Aorta (tissue), 5 donors: ENCODE measurements at regions of chr15 and their contacts with region 1.

Region 1: DNA sequence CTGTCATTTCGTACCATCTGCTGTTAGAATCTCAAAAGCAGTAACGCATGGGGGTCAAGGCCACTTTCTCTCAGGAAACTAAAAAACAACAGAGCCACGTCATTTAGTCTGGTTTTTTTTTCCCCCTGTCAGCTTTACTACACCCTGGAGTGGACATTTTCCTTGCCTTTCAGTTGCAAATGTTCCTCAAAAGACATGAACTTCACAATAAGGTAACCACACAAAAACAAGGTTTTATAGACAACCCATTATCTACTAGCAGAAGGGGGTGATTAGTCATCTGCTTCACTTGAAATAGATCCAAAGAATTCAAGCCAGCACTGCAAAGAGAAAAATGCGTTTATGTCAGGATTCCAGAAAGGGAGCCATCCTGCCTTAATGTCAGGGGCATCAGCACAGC is 171.8 kb upstream of the CDIN1 start:
- DNase-seq: no peak
- ATAC-seq: no peak
- H3K4me3 ChIP-seq: no peak overlapping the region
- H3K27ac ChIP-seq: no peak overlapping the region
- H3K4me1 ChIP-seq: no peaks in the 10 kb centered on the region
- H3K27me3 ChIP-seq: no peaks in the 10 kb centered on the region

Region 2: GRCh38 chr15:36356978-36357601 is 50.6 kb before region 1 on chr15:
- intact Hi-C with region 1: no loop called
- DNase-seq: no peak
- ATAC-seq: peak; percentile 89
- H3K4me3 ChIP-seq: no peak overlapping the region
- H3K27ac ChIP-seq: peak overlapping the region; percentile 51 to 85
- H3K4me1 ChIP-seq: peaks cover 6 to 7% of the 10 kb centered on the region in 2 donors
- H3K27me3 ChIP-seq: no peaks in the 10 kb centered on the region

Region 3: GRCh38 chr15:36392676-36393266 is 14.9 kb before region 1 on chr15:
- intact Hi-C with region 1: no loop called
- DNase-seq: no peak
- ATAC-seq: no peak
- H3K4me3 ChIP-seq: no peak overlapping the region
- H3K27ac ChIP-seq: no peak overlapping the region
- H3K4me1 ChIP-seq: no peaks in the 10 kb centered on the region
- H3K27me3 ChIP-seq: no peaks in the 10 kb centered on the region

Region 4: DNA sequence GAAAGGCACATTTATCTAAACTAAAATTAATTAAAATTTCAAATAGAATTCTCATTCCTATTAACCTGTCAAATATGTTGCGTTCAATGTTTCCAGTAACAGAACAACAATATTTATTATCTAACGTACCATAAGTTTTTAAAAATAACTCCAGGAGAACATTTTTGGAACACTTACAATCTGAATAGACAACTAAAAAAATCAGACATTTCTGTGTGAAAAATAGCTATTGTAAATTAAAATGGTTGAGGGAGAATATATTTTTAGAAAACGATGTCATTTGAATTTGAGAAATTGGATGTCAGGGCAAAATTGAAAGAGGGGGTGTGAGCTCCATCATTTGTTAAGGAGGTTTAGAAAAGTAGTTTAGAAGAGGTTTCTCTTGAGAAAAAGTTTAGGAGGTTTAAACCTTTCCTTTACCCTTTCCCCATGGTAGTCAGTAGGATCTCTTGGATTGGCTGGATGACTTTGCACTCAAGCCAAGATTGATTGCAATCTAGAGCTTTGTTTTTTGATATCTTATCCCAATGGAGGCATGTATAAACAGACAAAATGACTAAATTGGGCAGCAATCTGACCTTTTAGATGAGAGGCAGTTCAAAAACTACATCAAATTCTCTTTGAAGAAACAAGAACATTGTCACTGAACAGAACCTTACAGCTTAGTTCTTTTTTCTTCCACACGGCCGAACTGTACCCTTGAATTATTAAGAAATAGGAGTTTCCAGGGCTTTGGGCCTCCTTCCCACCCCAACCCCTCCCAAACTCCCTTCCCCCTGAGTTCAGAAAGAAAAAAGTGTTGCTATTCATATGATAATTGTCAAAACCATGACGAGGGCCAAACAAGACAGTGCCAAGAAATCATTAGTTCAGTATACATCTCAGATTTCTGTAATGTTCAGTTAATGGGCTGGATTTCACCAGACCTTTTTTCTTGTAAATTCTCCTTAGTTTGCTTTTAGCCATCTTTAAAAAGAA is 92.1 kb after region 1 on chr15:
- intact Hi-C with region 1: no loop called
- DNase-seq: no peak
- ATAC-seq: no peak
- H3K4me3 ChIP-seq: no peak overlapping the region
- H3K27ac ChIP-seq: no peak overlapping the region
- H3K4me1 ChIP-seq: no peaks in the 10 kb centered on the region
- H3K27me3 ChIP-seq: no peaks in the 10 kb centered on the region

Region 5: DNA sequence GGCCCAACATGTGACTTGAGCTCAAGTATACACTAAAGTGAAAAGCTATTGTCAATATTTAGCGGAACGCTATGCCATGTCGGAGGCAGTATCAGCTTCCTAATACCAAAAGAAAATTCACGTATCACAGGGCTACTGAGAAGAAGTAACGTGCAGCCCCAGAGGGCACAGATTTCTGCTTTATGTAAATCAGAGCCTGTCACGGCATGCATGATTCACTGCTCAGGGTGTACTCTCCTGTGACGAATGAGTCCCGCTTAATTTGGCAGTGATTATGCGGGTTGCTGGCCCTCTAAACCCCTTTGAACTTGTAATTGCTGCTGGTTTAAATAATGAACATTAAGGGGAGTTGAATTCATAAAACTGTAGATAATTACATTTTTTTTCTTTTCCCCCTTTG is 607.4 kb after region 1 on chr15:
- intact Hi-C with region 1: loop called in 1 of 2 experiments (anchors 5 kb)
- DNase-seq: peak in 1 of 2 donors; percentile 52
- ATAC-seq: peak; percentile 59
- H3K4me3 ChIP-seq: no peak overlapping the region
- H3K27ac ChIP-seq: peak overlapping the region; percentile 12 to 59
- H3K4me1 ChIP-seq: peaks cover 2 to 5% of the 10 kb centered on the region in 2 donors
- H3K27me3 ChIP-seq: no peaks in the 10 kb centered on the region